ENCODE measurements at regions of chr6 and their contacts with region 1.

Region 1: GRCh38 chr6:2940010-2940850 is 31.1 kb downstream of the SERPINB6 start:
- DNase-seq: peak; percentile 92
- ATAC-seq: peak; percentile 84
- H3K4me3 Mint-ChIP-seq: peak overlapping the region; percentile 50
- H3K27ac Mint-ChIP-seq: peak overlapping the region; percentile 94
- H3K4me1 Mint-ChIP-seq: peaks cover 67% of the 10 kb centered on the region
- H3K27me3 Mint-ChIP-seq: no peaks in the 10 kb centered on the region

Region 2: GRCh38 chr6:2749969-2750600 is 190.1 kb before region 1 on chr6:
- CTCF ChIA-PET with region 1: no interaction called
- POLR2A ChIA-PET with region 1: no interaction called
- intact Hi-C with region 1: no loop called
- DNase-seq: peak; percentile 83
- ATAC-seq: peak; percentile 66
- H3K4me3 Mint-ChIP-seq: no peak overlapping the region
- H3K27ac Mint-ChIP-seq: no peak overlapping the region
- H3K4me1 Mint-ChIP-seq: peaks cover 3% of the 10 kb centered on the region
- H3K27me3 Mint-ChIP-seq: peaks cover 8% of the 10 kb centered on the region

Region 3: GRCh38 chr6:2841264-2842138 is 98.7 kb before region 1 on chr6 and contains the start of gene SERPINB1:
- CTCF ChIA-PET with region 1: interaction called, 165 read pairs
- POLR2A ChIA-PET with region 1: interaction called, 64 read pairs
- intact Hi-C with region 1: loop called (anchors 1 kb)
- DNase-seq: peak; percentile 96
- ATAC-seq: peak; percentile 86
- H3K4me3 Mint-ChIP-seq: peak within 1 kb of the TSS; percentile 96
- H3K27ac Mint-ChIP-seq: peak within 1 kb of the TSS; percentile 91
- H3K4me1 Mint-ChIP-seq: peaks cover 67% of the 10 kb centered on the region
- H3K27me3 Mint-ChIP-seq: no peaks in the 10 kb centered on the region
- total RNA-seq, gene SERPINB1: 200 to 243 TPM

Region 4: DNA sequence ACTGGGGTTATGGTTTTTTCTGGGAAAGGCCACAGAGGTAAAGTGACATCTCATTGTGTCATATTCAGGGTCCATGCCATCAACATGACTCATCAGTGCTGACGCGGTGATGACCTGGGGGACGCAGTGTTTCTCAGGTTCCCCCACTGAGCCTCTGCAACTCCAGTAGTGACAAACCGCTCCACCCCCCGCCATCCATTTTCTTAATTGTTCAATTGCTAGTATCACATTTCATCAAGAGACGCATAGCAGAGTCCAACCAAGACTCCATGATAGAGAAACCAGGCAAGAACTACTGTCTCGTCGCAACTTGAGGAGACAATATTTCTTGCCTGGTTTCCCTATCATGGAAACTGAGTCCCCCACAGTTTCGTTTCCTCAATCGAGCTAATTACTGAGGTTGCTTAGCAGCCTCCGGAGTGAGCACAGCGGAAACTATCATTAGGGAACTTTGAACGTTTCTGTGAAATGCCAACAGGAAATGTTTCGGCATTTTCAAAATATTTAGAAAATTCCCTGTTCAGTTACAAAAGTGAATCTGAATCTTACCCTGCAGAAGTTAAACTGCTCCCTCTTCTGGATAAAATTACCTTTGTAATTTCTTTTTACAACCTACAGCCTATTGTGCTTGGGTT is 86.4 kb before region 1 on chr6:
- CTCF ChIA-PET with region 1: interaction called, 7 read pairs
- POLR2A ChIA-PET with region 1: interaction called, 19 read pairs
- intact Hi-C with region 1: loop called (anchors 1 kb)
- DNase-seq: peak; percentile 94
- ATAC-seq: peak; percentile 57
- H3K4me3 Mint-ChIP-seq: peak overlapping the region; percentile 62
- H3K27ac Mint-ChIP-seq: peak overlapping the region; percentile 100
- H3K4me1 Mint-ChIP-seq: peaks cover 66% of the 10 kb centered on the region
- H3K27me3 Mint-ChIP-seq: no peaks in the 10 kb centered on the region

Region 5: DNA sequence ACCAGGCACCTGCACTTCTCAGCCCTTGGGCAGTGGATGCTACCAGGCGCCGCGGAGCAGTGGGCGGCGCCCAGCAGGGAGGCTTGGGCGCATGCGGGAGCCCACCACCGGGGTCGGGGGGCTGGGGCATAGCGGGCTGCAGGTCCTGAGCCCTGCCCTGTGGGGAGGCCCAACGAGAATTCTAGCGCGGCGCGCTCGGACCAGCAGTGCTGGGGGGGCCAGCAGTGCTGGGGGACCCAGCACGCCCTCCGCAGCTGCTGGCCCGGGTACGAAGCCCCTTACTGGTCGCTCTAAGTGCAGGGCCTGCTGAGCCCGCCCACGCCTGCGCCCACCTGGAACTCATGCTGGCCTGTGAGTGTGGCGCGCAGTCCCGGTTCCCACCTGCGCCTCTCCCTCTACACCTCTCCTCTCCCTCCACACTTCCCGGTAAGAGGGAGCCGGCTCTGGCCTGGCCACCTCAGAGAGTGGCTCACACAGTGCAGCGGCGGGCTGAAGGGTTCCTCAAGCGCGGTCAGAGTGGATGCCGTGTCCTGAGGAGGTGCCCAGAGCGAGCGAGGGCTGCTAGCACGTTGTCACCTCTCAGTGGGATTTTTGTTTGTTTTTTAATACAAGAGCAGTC is 70.1 kb before region 1 on chr6:
- CTCF ChIA-PET with region 1: interaction called, 9 read pairs
- POLR2A ChIA-PET with region 1: interaction called, 30 read pairs
- intact Hi-C with region 1: no loop called
- DNase-seq: no peak
- ATAC-seq: no peak
- H3K4me3 Mint-ChIP-seq: no peak overlapping the region
- H3K27ac Mint-ChIP-seq: no peak overlapping the region
- H3K4me1 Mint-ChIP-seq: peaks cover 69% of the 10 kb centered on the region
- H3K27me3 Mint-ChIP-seq: no peaks in the 10 kb centered on the region

Region 6: DNA sequence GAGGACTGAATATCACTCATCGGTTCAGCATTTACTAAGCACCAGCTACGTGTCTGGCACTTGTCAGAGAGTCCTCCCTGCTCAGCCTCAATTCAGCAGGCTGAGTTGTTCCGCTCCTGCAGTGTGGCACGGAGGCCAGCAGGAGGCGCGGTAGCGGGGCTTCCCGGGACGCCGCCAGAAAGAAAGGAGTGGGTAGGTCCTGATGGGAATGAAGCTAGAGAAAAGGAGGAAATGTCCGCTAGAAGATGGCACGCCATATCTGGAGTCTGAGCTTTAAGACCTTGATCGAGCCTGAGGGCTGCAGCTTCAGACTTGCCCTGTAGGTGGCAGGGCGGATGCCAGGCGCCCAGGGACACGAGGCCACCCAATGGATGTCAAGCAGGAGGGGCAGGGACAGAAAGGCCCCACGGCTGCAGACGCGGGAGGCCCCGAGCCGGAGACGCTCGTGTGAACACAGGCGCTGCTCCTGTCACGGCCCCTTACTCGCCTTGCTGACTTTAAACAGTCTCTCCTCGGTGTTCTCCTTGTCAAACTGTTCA is 12.4 kb after region 1 on chr6:
- CTCF ChIA-PET with region 1: interaction called, 56 read pairs
- POLR2A ChIA-PET with region 1: interaction called, 7 read pairs
- intact Hi-C with region 1: no loop called
- DNase-seq: peak; percentile 80
- ATAC-seq: peak; percentile 97
- H3K4me3 Mint-ChIP-seq: peak overlapping the region; percentile 46
- H3K27ac Mint-ChIP-seq: peak overlapping the region; percentile 74
- H3K4me1 Mint-ChIP-seq: peaks cover 15% of the 10 kb centered on the region
- H3K27me3 Mint-ChIP-seq: no peaks in the 10 kb centered on the region

Region 7: DNA sequence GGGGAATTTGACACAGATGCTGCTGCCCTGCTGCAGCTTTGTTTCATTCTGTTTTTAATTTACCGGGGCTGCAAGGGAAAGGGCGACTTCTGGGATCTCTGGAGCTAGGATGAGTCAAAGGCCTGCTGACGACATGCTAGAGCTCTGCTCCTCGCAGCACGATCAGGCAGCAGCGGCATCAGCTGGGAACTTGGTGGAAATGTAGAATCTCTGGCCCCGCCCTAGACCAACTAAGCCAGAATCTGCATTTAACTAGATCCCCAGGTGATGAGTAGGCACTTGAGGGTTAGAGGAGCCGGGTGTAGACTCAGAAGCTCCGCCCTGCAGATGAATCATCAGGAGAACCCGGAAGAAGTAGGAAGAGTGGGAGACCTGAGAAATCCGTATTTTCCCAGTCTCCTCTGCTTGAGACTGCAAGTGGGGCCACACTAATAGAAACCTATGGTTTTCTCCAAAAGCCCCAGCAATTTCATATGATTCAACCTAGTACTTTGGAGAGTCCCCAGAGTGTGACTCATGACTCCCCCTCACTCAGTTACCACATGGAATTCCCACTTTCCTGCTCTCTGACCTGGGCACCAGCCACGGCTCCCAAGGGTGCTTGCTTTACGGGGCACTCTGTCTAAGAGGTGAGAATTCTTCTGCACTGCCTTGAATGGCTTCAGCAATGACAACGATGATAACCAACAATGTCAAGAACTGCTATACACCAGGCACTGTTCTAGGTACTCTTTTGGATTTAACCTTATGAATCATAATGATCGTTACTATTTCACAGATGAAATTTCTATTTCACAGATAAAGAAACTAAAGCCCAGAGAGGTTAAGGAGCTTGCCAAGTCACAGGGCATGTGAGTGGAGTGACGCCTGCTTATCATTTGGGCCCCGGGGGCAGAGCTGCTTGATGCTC is 269.1 kb after region 1 on chr6:
- CTCF ChIA-PET with region 1: no interaction called
- POLR2A ChIA-PET with region 1: no interaction called
- intact Hi-C with region 1: loop called in 1 of 2 experiments (anchors 1 kb)
- DNase-seq: peak; percentile 80
- ATAC-seq: peak; percentile 87
- H3K4me3 Mint-ChIP-seq: peak overlapping the region; percentile 32
- H3K27ac Mint-ChIP-seq: peak overlapping the region; percentile 86
- H3K4me1 Mint-ChIP-seq: peaks cover 28% of the 10 kb centered on the region
- H3K27me3 Mint-ChIP-seq: peaks cover 34% of the 10 kb centered on the region

Region 8: DNA sequence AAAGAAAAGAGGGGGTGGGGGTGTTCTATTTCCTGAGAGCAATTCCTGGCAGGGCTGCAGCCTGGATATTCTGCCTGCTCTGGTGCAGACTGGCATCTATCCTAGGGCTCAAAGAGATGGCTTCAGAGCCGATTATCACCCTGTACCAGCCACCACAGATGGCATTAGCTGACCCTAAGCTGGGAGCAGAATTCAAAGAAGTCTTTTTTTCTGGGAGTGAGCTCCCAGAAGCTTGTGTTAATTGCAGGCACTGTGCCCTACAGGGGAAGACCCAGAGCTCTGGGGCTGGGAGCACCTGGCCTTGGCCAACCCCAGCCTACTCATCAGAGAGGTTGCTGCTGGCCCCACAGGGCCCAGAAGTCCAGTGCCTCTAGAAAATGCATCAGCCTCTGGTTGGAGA is 725.4 kb after region 1 on chr6:
- CTCF ChIA-PET with region 1: no interaction called
- POLR2A ChIA-PET with region 1: no interaction called
- intact Hi-C with region 1: no loop called
- DNase-seq: no peak
- ATAC-seq: no peak
- H3K4me3 Mint-ChIP-seq: no peak overlapping the region
- H3K27ac Mint-ChIP-seq: no peak overlapping the region
- H3K4me1 Mint-ChIP-seq: no peaks in the 10 kb centered on the region
- H3K27me3 Mint-ChIP-seq: peaks cover 2% of the 10 kb centered on the region